ENCODE measurements at regions of chr5 and their contacts with region 1.

Region 1: GRCh38 chr5:132386644-132387286 is 17.3 kb downstream of the SLC22A5 start:
- DNase-seq: peak; percentile 71 to 85 (median 77)
- ATAC-seq: peak; percentile 79 to 86 (median 80)
- H3K4me3 ChIP-seq: no peak overlapping the region
- H3K27ac ChIP-seq: peak overlapping the region; percentile 69 to 90 (median 86)
- H3K4me1 ChIP-seq: peaks cover 0 to 63% (median 49%) of the 10 kb centered on the region in 12 donors
- H3K27me3 ChIP-seq: no peaks in the 10 kb centered on the region
- CTCF ChIP-seq: peak; percentile 69 to 92 (median 82)
- POLR2A ChIP-seq: no peak

Region 2: DNA sequence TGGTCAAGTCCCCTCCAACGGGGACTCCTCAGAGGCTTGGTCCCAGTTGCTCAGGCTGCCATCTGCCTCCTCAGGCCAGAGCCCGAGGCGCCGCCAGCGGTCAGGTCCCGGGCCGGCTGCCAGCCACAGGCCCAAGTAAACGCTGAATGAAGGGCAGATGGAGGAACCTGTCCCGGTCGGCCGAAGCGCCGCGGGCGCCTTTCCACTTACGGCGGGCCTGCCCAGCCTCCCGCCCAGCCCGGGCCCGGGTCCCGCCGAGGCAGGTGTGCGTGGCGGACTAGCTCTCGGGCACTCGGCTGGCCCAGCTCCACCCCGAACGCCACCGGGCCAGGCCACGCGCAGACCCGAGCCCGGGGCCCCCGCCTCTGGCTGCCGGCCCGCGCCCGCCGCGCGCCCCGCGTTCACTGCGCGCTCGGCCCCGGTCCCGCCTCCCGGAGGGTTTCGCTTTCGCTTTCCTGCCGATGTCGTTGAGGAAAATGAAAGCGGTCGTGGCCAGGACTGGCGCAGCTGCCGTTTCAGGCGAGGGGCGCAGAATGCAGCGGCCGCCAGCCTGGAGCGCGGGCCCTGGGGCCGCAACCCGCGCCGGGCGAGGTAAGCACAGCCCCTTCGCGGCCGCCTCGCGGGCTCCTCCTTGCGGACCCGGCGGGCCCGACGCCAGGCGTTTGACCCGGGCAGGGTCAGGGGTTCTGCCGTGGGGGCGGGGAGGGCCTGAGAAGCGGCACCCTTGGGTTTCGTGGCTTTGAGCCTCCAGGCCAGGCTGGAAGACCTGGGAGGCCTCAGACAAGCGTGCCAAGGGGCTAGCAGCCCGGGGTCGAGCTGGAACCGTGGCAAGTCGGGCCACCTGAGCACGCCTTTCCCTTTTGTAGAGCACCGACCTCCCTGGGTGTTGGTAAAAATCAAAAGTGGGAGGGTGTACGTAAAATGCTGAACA is 24.0 kb after region 1 on chr5:
- intact Hi-C with region 1: loop called in 4 of 10 experiments (anchors 2 kb)
- DNase-seq: peak; percentile 85 to 92 (median 90)
- ATAC-seq: peak; percentile 71 to 87 (median 78)
- H3K4me3 ChIP-seq: peak overlapping the region; percentile 67 to 85 (median 79)
- H3K27ac ChIP-seq: peak overlapping the region; percentile 97 to 99 (median 98)
- H3K4me1 ChIP-seq: peaks cover 7 to 69% (median 57%) of the 10 kb centered on the region in 12 donors
- H3K27me3 ChIP-seq: no peaks in the 10 kb centered on the region
- CTCF ChIP-seq: peak; percentile 47 to 79 (median 68)
- POLR2A ChIP-seq: peak in 1 of 2 donors; percentile 71

Region 3: DNA sequence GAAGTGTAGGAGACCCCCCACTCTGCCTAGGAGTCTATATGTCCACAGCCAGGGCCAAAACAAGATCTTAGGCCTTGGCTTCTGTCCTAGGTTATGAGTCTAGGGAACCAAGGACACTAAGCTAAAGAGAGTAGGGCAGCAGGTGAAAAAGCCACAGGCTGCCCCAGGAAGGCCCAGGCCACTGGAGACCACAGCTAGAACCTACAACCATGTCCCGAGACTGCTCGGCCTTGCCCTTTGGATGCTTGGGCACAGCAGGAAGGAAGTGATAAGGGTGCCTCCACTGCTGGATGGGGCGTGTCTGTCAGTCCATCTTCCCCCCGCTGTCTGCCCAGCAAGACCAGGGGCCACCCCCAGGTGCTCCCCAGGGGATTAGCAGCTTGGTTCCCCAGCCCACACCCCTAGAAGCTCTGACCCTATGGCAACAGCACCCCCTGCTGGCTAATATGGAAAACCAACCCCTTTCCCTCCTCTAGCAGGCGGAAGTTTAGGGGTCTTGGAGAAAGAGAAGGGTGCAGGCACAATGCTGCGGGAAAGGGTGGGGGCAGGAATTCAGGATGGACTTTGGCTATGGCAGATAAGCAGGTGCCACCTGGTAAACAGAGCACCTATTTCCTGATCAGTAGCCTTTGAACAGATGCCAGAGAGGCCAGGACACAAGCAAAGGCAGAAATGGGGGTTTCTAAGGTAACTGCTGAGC is 114.3 kb after region 1 on chr5:
- intact Hi-C with region 1: loop called (anchors 1 to 2 kb)
- DNase-seq: peak; percentile 57 to 77 (median 69)
- ATAC-seq: peak in 3 of 4 donors; percentile 10 to 42 (median 19)
- H3K4me3 ChIP-seq: no peak overlapping the region
- H3K27ac ChIP-seq: peak overlapping the region in 11 of 12 donors; percentile 8 to 96 (median 42)
- H3K4me1 ChIP-seq: peaks cover 0 to 65% (median 29%) of the 10 kb centered on the region in 12 donors
- H3K27me3 ChIP-seq: no peaks in the 10 kb centered on the region
- CTCF ChIP-seq: peak; percentile 70 to 93 (median 83)
- POLR2A ChIP-seq: no peak

Region 4: DNA sequence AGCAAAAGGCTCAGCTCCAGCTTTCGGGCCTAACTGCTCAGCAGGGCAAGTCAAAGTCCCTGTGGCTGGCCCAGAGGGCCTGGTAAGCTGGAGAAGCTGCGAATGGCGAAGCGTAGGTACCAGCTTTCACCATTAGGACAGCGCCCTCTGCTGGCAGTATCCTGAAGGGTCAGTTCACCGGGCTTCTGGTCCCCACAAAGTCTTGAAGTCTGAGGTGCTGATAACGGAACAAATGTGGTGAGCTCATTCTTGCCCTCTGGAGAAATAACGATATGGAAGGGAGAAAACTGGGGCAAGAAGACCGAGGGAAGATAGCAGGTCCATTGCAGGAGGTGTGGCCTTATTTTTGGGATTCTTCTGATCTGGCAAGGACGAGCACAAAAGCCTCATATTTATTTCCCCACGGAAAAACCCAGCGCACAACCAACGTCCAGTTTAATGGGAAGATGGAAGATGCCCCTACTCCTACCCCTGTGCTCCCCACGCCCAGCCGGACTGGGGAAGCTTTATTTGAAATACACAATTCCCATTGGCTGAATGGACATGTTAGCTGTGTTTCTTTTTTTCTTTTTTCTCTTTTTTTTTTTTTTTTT is 433.5 kb after region 1 on chr5:
- intact Hi-C with region 1: loop called in 9 of 10 experiments (anchors 2 to 10 kb)
- DNase-seq: peak; percentile 86 to 93 (median 90)
- ATAC-seq: peak; percentile 75 to 88 (median 84)
- H3K4me3 ChIP-seq: peak overlapping the region in 1 of 12 donors; percentile 14
- H3K27ac ChIP-seq: no peak overlapping the region
- H3K4me1 ChIP-seq: peaks cover 0 to 16% (median 5%) of the 10 kb centered on the region in 12 donors
- H3K27me3 ChIP-seq: peaks cover 0 to 33% (median 0%) of the 10 kb centered on the region in 9 donors
- CTCF ChIP-seq: peak; percentile 84 to 94 (median 92)
- POLR2A ChIP-seq: no peak

Region 5: DNA sequence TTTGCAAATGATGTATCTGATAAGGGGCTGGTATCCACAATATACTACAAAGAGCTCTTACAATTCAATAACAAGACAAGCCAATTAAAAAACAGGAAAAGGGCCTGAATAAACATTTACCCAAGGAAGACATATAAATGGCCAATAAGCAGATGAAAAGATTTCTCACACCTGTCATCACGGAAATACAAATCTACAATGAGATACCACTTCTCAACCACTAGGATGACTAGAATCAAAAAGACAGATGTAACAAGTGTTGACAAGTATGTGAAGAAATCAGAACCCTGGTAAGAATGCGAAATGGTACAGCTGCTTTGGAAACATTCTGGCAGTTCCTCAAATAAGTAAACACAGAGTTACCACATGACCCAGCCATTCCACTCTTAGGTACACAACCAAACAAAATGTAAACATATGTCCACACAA is 519.1 kb after region 1 on chr5:
- intact Hi-C with region 1: no loop called
- DNase-seq: no peak
- ATAC-seq: peak in 2 of 4 donors; percentile 28 to 32
- H3K4me3 ChIP-seq: no peak overlapping the region
- H3K27ac ChIP-seq: no peak overlapping the region
- H3K4me1 ChIP-seq: peaks cover 0 to 23% (median 3%) of the 10 kb centered on the region in 12 donors
- H3K27me3 ChIP-seq: no peaks in the 10 kb centered on the region
- CTCF ChIP-seq: no peak
- POLR2A ChIP-seq: no peak

Measured in heart left ventricle (tissue), 16 donors.